CD8-positive, alpha-beta T cell (primary cell): ENCODE measurements at regions of chr1 and their contacts with region 1.

Region 1: DNA sequence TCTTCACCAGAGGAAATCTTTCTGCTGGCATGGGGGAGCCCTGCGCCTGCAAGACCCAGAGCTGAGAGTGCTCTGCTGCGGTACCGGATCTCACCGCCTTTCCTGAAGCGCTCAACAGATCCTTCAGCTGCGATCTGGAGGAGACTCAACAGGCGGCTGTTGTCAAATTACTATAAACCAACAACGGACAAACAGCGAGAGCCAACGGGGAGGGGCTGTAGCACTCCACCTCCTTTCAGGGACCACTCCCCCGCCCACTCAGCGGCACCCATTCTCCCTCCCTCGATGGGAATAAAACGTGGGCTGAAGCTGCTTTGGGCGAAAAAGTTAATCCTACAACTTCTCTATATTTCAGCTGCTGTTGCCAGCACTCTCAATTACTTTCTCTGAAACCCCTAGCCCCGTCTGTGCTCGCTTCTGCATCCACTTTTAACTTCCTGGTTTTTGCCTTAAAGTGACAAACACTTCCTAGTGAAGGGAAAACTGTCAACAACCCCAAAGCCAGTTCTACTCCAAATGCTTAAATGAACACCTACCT is at the start of gene FMO5:
- DNase-seq: peak; percentile 3 to 72 (median 50)
- ATAC-seq: peak; percentile 95
- H3K4me3 ChIP-seq: peak within 1 kb of the TSS; percentile 68 to 81
- H3K4me3 Mint-ChIP-seq: peak within 1 kb of the TSS; percentile 95
- H3K27ac ChIP-seq: peak within 1 kb of the TSS; percentile 2 to 62
- H3K27ac Mint-ChIP-seq: peak within 1 kb of the TSS; percentile 80
- H3K4me1 ChIP-seq: peaks cover 5% of the 10 kb centered on the region
- H3K4me1 Mint-ChIP-seq: peaks cover 15% of the 10 kb centered on the region
- H3K27me3 ChIP-seq: no peaks in the 10 kb centered on the region
- H3K27me3 Mint-ChIP-seq: no peaks in the 10 kb centered on the region
- CTCF ChIP-seq: no peak
- total RNA-seq, gene FMO5: 0.43 to 1.3 TPM

Region 2: DNA sequence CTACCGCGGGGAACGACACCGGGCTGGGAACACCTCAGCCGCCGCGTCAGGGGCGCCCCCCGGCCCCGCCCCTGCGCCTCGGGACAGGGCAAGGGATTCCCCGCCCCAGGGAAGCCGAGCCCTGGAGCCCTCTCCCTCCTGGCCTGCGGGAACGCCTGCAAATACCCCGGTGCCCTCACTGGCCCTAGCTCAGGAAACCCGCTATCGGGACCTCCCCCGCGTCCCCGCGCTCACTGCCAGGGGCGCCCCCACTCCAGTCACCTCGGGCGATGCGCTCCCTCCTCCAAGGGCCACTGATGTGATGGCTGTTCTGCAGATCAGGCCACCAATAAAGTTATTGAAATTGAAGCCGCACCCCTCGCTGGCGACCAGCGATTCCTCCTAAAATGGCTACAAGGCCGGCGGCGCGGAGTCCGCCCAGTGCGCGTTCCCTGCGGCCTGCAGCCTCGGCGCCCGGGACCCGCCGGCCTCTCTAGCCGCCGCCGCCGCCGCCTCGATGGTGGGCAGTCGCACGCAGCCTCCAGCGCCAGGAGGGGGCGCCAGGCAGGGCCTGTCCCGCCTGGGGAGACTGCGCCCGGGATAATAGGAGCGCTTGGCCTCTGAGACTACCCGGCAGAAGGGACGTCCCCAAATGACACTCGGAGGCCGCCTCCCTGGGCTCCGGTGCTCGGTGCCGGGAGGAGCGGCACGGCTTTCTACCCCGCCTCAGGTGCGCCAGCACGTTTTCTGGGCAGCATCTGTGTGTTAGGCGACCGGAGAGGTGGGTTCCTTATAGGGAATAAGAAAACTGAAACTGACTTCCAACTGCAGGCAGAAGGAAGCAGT is 52.9 kb before region 1 on chr1 and contains the start of gene PRKAB2:
- CTCF ChIA-PET with region 1: interaction called, 4 read pairs
- POLR2A ChIA-PET with region 1: interaction called, 7 read pairs
- intact Hi-C with region 1: loop called in 1 of 2 experiments (anchors 5 kb)
- DNase-seq: peak; percentile 74 to 94 (median 88)
- ATAC-seq: peak; percentile 79
- H3K4me3 ChIP-seq: peak within 1 kb of the TSS; percentile 85 to 96
- H3K4me3 Mint-ChIP-seq: peak within 1 kb of the TSS; percentile 96
- H3K27ac ChIP-seq: peak within 1 kb of the TSS; percentile 57 to 85
- H3K27ac Mint-ChIP-seq: peak within 1 kb of the TSS; percentile 95
- H3K4me1 ChIP-seq: peaks cover 16% of the 10 kb centered on the region
- H3K4me1 Mint-ChIP-seq: peaks cover 49% of the 10 kb centered on the region
- H3K27me3 ChIP-seq: no peaks in the 10 kb centered on the region
- H3K27me3 Mint-ChIP-seq: no peaks in the 10 kb centered on the region
- CTCF ChIP-seq: peak; percentile 83
- total RNA-seq, gene PRKAB2: 5.2 to 5.8 TPM

Region 3: DNA sequence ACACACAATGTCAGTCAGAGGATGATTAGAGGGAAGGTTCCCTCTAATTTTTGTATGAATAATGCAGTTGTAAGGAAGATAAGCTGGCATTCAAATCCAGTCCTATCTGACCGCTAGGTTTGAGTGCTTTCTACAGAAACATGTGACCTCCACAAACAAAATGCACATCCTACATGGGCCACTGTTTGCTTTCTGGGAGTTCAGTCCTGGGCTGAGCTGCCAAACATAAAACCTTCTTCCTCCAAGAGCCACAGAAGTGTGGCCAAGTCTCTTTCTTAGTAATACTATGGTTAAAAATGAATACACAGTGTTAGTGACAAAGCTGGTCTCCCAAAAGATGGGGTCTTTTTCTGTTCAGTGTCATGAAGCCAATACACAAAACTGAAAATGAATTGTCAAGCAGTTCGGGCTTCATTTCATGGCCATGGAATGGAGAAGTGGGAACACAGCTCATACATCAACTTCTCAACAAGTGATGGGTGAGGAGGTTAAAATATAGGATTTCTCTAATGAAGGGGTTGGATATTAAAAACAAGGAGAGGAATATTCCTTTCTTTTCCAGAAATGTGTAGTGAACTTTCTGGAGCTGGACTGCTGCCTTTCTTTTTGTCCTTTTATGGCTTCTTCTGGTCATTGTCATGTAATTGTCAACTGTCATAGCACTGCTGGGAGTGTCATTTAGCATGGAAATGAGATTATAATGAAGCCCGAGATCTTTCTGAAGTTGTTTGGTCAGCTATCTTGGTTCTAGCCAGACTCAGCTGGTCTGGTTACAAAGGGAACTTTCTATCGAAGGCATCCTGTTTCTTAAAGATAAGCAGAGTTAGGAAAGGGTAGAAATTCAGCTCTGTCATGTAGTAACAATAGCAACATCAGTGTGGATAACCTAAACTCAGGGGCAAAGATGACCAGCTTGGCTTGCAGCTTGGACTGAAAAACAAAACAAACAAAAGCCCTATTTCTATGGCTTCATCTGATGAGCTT is 152.3 kb after region 1 on chr1:
- CTCF ChIA-PET with region 1: no interaction called
- POLR2A ChIA-PET with region 1: no interaction called
- intact Hi-C with region 1: no loop called
- DNase-seq: no peak
- ATAC-seq: no peak
- H3K4me3 ChIP-seq: no peak overlapping the region
- H3K4me3 Mint-ChIP-seq: no peak overlapping the region
- H3K27ac ChIP-seq: no peak overlapping the region
- H3K27ac Mint-ChIP-seq: no peak overlapping the region
- H3K4me1 ChIP-seq: no peaks in the 10 kb centered on the region
- H3K4me1 Mint-ChIP-seq: no peaks in the 10 kb centered on the region
- H3K27me3 ChIP-seq: no peaks in the 10 kb centered on the region
- H3K27me3 Mint-ChIP-seq: peaks cover 18% of the 10 kb centered on the region
- CTCF ChIP-seq: no peak

Region 4: DNA sequence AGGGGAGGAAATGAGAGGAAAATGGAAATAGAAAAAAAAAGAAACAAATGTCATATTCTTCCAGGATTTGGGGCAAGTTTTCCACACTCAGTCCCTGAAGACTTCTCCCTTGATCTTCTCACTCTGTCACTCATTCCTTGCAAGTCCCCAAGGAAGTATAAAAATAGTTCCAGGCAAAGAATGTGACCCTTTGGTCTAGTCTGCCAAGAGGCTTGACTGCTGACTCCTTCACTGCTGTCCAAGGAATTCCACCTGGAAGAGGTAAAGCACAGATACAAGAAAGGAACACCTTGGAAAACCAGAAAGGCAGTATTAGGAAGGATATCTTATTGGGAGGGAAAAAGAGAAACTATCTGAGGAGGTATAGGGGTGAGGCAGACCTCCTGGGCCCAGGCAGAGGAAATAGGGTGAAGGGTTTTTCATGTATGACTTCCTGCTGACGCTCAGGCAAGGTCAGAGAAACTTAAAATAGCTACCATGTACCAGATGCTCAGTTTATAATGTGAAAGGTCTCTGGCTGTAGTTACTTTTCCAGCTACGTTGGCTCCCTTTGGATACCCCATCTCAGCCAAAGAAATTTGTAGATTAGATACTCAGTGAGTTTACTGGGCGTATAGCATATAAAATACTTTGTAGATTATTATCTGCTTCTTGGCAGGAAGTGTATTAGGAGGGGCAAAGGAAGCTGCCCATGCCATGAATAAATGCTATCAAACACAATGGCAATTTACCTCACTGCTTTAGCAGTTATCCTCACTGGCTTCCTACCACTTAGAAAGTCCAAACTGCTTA is 537.2 kb after region 1 on chr1:
- CTCF ChIA-PET with region 1: no interaction called
- POLR2A ChIA-PET with region 1: no interaction called
- intact Hi-C with region 1: no loop called
- DNase-seq: peak in 2 of 9 experiments; percentile 13 to 34
- ATAC-seq: no peak
- H3K4me3 ChIP-seq: no peak overlapping the region
- H3K4me3 Mint-ChIP-seq: peak overlapping the region; percentile 59
- H3K27ac ChIP-seq: peak overlapping the region; percentile 6 to 60
- H3K27ac Mint-ChIP-seq: peak overlapping the region; percentile 89
- H3K4me1 ChIP-seq: peaks cover 30% of the 10 kb centered on the region
- H3K4me1 Mint-ChIP-seq: peaks cover 31% of the 10 kb centered on the region
- H3K27me3 ChIP-seq: no peaks in the 10 kb centered on the region
- H3K27me3 Mint-ChIP-seq: no peaks in the 10 kb centered on the region
- CTCF ChIP-seq: no peak